ENCODE measurements at regions of chr2 and their contacts with region 1.

Region 1: DNA sequence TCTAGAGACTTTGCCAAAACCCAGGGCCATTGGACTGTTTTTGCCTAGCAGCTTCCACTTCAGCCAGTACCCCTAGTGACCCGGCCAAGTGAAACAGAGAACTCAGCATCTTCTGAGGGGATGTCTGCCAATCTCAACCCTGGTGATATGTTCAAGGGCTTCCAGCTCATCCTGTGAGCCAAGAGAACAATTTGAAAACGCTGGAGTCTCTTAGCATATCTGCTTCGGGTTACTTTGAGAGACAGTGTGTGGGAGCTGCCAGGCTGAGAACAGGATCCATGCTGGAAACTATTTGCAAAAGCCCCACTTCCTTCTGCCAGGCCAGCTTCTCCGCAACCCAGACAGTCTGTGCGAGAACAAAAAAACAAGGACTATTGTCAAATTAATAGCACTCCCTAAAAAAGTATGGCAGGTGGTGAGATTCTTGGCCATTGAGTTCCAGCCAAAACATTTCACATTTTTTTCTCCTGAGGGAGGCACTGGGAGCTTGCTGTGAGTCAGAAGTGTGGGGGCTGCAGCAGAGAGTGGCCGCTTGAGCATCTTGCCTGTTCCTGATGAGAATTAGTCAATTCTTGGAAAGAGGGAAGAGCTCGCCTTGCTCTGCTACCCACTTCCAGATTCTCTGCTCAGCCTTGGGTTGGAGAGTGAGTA is 395.6 kb upstream of the TRIB2 start:
- DNase-seq: peak; percentile 98
- ATAC-seq: peak; percentile 88
- H3K4me3 ChIP-seq: no peak overlapping the region
- H3K27ac ChIP-seq: peak overlapping the region; percentile 12; the same call in 1 of the 2 replicates
- H3K4me1 ChIP-seq: peaks cover 15% of the 10 kb centered on the region
- H3K27me3 ChIP-seq: no peaks in the 10 kb centered on the region
- CTCF ChIP-seq: no peak; the same call in 1 of the 2 replicates
- POLR2A ChIP-seq: no peak
- RAD21 ChIP-seq: peak; percentile 37

Region 2: DNA sequence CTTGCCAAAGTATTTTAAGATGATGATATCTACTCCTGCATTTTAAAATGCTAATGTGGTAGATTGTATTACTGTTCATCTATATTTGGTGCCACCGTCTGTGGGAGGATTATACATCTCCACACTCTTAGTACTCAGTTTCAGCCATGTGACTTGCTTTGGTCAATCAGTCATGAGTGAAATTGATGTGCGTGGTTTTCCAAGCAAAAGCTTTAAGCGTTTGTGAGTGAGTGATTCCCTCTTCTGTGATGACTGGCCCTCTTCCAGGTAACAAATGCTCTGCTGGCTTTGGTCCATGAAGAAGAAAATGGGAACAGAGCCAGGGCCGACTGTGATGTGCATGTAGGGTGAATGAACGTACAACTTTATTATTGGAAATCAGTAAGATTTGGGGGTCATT is 244.3 kb before region 1 on chr2:
- CTCF ChIA-PET with region 1: no interaction called
- POLR2A ChIA-PET with region 1: interaction called, 10 read pairs
- dilution Hi-C with region 1: no loop called
- in situ Hi-C with region 1: no loop called
- intact Hi-C with region 1: no loop called
- DNase-seq: no peak
- ATAC-seq: no peak
- H3K4me3 ChIP-seq: no peak overlapping the region
- H3K27ac ChIP-seq: no peak overlapping the region
- H3K4me1 ChIP-seq: no peaks in the 10 kb centered on the region
- H3K27me3 ChIP-seq: no peaks in the 10 kb centered on the region
- CTCF ChIP-seq: no peak
- POLR2A ChIP-seq: no peak
- RAD21 ChIP-seq: no peak

Measured in IMR-90 (cell line).